ENCODE measurements at regions of chr15 and their contacts with region 1.

Region 1: DNA sequence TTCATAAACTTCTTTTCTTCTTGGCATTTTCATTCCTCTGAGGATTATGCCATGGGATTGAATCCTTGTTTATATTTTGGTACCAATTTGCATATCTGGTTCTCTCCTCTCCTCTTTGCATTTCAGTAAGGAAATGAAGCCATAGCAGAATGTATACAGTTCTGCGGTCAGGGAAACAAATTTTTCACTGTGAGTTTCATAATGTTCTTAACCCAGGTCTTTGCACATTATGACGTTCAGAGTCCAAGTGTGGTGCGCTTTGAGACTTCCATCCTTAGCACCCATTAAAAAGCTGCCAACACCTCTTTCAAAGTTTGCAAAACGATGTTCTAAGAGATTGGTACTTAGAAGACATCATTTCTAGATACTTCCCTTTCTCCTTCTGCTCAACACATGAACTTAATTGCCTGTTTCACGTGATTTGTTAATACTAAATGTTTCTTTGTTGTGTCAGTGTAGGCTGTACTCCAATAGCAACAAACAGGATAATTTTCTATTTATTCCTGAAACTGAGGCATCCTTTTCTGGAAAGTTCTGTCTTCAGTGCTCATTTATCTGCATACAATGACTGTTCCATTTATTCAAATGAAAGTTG is 953.1 kb upstream of the NR2F2 start:
- DNase-seq: no peak

Region 2: GRCh38 chr15:95401587-95401986 is 24.2 kb after region 1 on chr15:
- intact Hi-C with region 1: no loop called
- DNase-seq: no peak

Region 3: DNA sequence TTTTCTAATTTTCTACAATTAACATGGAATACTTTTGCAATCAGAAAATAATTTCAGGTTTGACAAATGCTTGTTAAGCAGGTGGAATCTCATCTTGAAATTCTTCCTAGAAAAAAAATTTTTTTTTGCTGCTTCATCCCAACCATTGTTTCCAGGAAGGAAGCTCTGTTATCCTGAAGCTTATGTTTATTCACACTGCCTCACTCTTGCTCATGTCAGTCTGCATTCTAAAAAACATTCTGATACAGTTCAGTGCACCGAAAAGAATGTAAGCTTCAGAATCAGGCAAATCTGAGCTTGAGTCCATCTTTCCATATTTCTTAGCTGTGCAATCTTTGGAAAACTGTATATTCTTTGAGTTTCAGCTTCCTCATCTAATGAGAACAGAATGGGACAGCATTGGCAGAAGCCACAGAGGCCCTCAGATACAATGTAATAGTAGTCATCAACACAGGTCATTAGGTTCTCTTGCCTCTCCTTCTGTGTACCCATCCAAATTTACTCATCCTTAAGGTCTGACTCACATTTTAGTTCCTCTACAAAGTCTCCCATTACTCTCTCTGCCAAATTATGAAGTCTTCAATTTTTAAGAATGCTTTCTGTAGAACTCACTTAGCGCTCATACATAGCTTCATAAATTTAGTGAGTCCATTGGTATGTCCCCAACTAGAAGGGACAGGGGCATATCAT is 71.3 kb after region 1 on chr15:
- intact Hi-C with region 1: loop called in 1 of 2 experiments (anchors 2 kb)
- DNase-seq: no peak

Measured in posterior vena cava (tissue), 2 donors.